ENCODE measurements at regions of chr6 and their contacts with region 1.

Region 1: DNA sequence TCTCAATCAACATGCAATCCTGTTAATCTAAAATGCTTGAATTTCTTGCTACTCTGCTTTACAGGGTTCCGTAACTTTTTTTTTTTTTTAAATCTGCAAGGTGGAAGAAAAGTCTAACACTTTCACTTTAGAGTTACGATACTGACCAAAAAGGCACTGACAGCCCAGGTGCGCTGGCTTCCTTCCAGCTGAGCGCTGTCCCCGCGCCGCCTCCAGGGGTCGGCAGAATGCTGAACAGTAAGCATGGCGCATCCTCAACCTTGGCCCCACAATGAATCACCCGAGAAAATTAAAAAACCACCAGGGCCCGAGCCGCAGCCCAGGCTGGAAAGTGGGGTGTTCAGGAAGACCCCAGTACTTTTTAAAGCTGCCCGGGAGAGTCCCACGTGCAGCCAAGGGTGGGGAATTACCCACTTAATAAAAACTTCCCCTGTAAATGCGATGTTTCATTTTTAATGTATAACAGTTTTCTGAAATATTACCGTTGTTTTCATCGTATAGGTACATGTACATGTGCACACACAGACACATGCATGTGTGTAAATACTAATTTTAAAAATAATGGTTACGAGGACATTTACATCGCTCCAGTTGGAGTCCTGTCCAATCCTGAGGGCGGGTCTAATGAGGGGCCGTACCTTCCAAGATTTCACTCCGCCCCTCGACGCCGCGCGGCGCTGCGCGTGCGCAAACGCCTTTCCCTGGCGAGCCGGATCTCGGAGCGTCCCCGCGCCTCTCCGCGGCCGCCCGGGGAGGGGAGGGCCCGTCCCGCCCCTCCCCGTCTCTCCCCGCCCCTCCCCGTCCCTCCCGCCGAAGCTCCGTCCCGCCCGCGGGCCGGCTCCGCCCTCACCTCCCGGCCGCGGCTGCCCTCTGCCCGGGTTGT is at the start of gene GINM1:
- DNase-seq: peak; percentile 96
- H3K4me3 Mint-ChIP-seq: peak within 1 kb of the TSS; percentile 89
- H3K27ac Mint-ChIP-seq: peak within 1 kb of the TSS; percentile 86
- H3K4me1 Mint-ChIP-seq: peaks cover 12% of the 10 kb centered on the region
- H3K27me3 Mint-ChIP-seq: peaks cover 4% of the 10 kb centered on the region
- total RNA-seq, gene GINM1: 17.6 and 19.0 TPM in 2 replicates

Region 2: DNA sequence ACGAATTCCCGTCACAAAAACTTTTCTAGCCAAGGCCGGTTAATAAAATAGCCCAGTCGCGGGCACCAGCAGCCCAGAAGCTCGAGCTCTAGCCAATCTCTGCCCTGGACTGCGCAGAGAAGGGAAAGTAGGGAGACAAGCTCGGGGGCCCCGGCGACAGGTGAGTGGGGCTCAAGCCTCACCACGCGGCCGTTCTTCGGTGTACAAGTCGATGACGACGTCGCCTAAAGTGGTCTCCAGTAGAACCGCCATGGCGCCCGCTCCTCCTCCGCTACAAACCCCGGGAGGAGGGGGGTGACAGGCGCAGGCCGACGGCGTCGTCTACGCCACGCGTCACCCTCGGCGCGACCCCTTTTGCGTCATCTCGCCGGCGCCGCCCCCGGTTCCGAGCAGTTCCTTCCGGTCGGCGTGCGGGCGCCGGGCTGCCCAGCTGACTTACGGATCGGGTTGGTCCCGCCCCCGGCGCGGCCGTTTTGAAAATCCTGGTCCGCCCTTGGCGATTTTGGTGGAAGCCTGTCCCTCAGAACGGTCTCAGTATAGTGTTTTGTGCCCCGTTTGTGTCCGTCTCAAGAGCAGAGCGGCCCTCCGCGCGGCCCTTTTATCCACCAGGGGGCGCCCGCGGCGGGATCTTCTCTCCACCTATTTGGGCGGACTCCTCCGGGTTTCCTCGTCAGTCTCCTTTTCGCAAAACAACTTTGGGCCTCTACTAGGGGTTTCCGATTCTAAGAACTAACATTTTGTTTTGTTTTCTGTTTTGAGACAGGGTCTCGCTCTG is 19.8 kb before region 1 on chr6 and contains the start of gene PPIL4:
- intact Hi-C with region 1: loop called (anchors 1 kb)
- DNase-seq: peak; percentile 95
- H3K4me3 Mint-ChIP-seq: peak within 1 kb of the TSS; percentile 96
- H3K27ac Mint-ChIP-seq: peak within 1 kb of the TSS; percentile 97
- H3K4me1 Mint-ChIP-seq: peaks cover 36% of the 10 kb centered on the region
- H3K27me3 Mint-ChIP-seq: peaks cover 6% of the 10 kb centered on the region
- total RNA-seq, gene PPIL4: 20.4 and 20.5 TPM in 2 replicates

Region 3: DNA sequence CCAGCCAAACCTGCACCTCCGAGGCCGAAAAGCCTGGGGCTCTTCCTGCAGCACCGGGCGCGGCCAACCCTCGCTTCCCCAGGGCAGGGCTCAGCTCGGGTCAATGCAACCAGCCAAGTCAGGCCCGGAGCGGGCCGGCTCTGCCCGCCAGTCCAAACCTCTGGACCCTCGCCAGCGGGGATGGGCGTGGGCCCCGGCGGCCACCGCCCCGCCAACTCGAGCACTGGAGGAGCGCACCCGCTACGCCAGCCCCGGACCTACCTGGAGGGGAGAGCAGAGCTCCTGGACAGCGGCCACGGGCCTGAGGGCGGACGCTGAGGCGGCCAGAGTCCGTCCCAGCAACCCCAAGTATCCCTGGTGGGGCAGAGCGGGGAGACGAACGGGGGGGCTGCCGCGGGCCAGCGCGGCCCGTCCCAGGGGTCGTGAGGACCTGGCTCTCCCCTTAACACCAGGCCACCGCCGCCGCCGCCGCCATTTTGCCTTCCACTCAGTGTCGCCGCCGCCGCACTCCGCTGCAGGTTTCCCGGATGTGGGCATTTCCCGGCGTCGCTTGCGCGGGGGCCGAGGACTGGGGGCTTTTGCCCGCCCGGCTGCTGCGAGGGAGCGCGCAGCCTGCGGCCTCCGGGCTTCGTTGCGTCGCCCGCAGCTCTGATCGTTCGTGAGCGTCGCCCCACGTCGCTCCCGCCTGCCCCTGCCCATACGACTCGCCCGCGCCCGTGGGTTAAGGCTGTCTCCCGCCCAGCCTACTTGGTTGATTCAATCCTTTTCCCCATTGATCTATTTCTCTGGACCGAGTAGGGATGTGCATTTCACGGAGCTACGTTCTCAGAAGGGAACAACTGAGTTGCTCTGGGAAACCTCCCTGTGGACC is 152.1 kb after region 1 on chr6 and contains the start of gene LATS1:
- intact Hi-C with region 1: loop called (anchors 1 kb)
- DNase-seq: peak; percentile 88
- H3K4me3 Mint-ChIP-seq: peak within 1 kb of the TSS; percentile 96
- H3K27ac Mint-ChIP-seq: peak within 1 kb of the TSS; percentile 97
- H3K4me1 Mint-ChIP-seq: peaks cover 31% of the 10 kb centered on the region
- H3K27me3 Mint-ChIP-seq: no peaks in the 10 kb centered on the region
- total RNA-seq, gene LATS1: 27.8 and 28.4 TPM in 2 replicates

Region 4: DNA sequence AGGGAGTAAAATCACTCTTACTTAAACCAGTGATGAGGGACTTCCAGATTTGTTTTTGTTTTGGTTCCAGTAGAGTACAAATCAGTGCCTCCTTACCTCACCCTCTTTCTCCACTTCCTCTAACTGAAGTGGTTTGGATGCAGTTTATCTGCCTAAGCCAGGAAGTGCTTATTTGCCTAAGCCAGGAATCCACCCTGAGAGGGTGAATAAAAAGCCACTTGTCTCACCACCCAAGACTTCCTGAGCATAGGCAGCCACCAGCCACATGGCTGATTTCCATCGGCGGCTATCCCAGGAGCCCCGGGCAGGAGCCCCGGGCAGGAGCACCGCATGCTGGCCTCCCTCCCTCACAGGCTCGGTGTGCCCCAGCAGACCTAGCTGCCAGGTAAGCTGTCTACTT is 286.4 kb after region 1 on chr6:
- intact Hi-C with region 1: no loop called
- DNase-seq: no peak
- H3K4me3 Mint-ChIP-seq: no peak overlapping the region
- H3K27ac Mint-ChIP-seq: no peak overlapping the region
- H3K4me1 Mint-ChIP-seq: peaks cover 11% of the 10 kb centered on the region
- H3K27me3 Mint-ChIP-seq: peaks cover 23% of the 10 kb centered on the region

Region 5: GRCh38 chr6:149863697-149864577 is 298.2 kb after region 1 on chr6 and contains the start of gene LRP11:
- intact Hi-C with region 1: loop called (anchors 10 kb)
- DNase-seq: peak; percentile 78
- H3K4me3 Mint-ChIP-seq: peak within 1 kb of the TSS; percentile 83
- H3K27ac Mint-ChIP-seq: no peak within 1 kb of the TSS
- H3K4me1 Mint-ChIP-seq: peaks cover 5% of the 10 kb centered on the region
- H3K27me3 Mint-ChIP-seq: peaks cover 32% of the 10 kb centered on the region
- total RNA-seq, gene LRP11: 3.6 and 4.3 TPM in 2 replicates

Region 6: GRCh38 chr6:149895833-149896271 is 330.1 kb after region 1 on chr6:
- intact Hi-C with region 1: no loop called
- DNase-seq: no peak
- H3K4me3 Mint-ChIP-seq: no peak overlapping the region
- H3K27ac Mint-ChIP-seq: no peak overlapping the region
- H3K4me1 Mint-ChIP-seq: peaks cover 34% of the 10 kb centered on the region
- H3K27me3 Mint-ChIP-seq: peaks cover 17% of the 10 kb centered on the region

Region 7: DNA sequence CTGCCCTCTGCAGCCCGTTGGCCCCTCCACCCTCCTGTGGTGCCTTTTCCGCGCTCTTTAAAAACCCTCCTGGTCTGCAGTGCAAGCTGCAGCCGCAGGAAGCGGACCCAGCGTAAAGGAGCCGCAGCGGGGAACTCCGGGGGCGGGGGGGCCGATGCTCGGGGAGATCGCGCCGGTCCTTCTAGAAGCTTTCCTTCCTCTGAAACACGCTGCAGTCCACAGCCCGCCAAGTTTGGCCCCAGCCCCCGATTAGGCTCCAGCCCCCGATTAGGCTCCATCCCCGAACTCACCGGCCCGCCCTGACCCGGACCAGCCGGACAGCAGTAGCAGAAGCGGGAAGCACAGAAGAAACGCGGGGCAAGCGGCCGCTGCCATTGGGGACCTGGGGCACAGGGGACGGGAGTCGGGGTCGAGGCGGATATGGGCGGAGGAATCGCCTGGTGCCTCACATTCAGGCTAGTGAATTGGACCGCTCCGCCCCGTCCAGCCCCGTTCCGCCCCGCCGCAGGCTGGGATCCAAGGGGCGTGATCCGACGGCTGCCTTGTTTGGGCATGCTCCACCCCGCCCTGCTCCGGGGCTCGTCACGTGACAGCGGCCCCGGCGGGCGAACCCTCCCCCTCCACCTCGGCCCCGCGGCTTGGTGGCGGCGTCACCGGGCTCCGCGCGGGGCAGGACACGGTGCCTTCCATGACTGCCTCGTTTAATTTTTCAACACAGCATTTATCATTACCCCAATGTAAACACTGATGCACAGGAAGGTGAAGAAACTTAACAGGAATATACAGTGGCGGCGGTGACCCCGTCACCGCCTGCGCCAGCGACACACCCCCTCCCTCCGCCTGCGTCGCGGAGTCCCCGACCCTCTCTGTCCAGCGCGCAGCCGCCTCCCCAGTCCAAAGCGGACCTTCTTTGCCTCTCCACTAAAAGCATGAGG is 439.3 kb after region 1 on chr6:
- intact Hi-C with region 1: loop called (anchors 10 kb)
- DNase-seq: peak; percentile 92
- H3K4me3 Mint-ChIP-seq: peak overlapping the region; percentile 84
- H3K27ac Mint-ChIP-seq: peak overlapping the region; percentile 74
- H3K4me1 Mint-ChIP-seq: peaks cover 49% of the 10 kb centered on the region
- H3K27me3 Mint-ChIP-seq: peaks cover 27% of the 10 kb centered on the region